Activated B cell treated with CpG ODN at 0.5 μM for 24 hours (primary cell): ENCODE measurements at regions of chr1 and their contacts with region 1.

Region 1: GRCh38 chr1:243748706-243749283 is 101.2 kb downstream of the AKT3 start:
- DNase-seq: no peak
- ATAC-seq: peak; percentile 97
- H3K4me3 Mint-ChIP-seq: no peak overlapping the region
- H3K27ac Mint-ChIP-seq: no peak overlapping the region
- H3K4me1 Mint-ChIP-seq: peaks cover 2% of the 10 kb centered on the region
- H3K27me3 Mint-ChIP-seq: no peaks in the 10 kb centered on the region
- CTCF ChIP-seq: no peak

Region 2: GRCh38 chr1:243475966-243476365 is 272.8 kb before region 1 on chr1:
- CTCF ChIA-PET with region 1: no interaction called
- POLR2A ChIA-PET with region 1: no interaction called
- intact Hi-C with region 1: loop called (anchors 5 kb)
- DNase-seq: no peak
- ATAC-seq: no peak
- H3K4me3 Mint-ChIP-seq: no peak overlapping the region
- H3K27ac Mint-ChIP-seq: no peak overlapping the region
- H3K4me1 Mint-ChIP-seq: peaks cover 25% of the 10 kb centered on the region
- H3K27me3 Mint-ChIP-seq: no peaks in the 10 kb centered on the region
- CTCF ChIP-seq: no peak

Region 3: DNA sequence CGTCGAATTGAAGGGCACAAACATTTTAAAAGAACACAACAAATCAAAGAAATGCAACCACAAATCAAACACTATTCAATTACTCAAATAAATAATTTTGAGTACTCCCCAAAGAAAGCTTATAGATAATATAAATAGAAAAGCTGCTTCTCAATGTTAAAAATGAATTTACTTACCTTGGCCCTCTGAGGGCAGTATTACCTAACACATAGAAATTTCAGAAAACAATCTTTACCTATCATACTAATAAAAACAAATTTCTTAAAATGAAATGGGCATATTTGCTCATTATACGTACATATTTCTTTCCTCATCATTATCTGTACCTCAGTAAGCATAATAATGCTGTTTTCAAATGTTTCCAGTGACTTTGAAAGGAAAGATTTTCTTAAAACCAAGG is 40.6 kb before region 1 on chr1:
- CTCF ChIA-PET with region 1: interaction called, 6 read pairs
- POLR2A ChIA-PET with region 1: no interaction called
- intact Hi-C with region 1: loop called (anchors 1 kb)
- DNase-seq: no peak
- ATAC-seq: no peak
- H3K4me3 Mint-ChIP-seq: no peak overlapping the region
- H3K27ac Mint-ChIP-seq: no peak overlapping the region
- H3K4me1 Mint-ChIP-seq: peaks cover 8% of the 10 kb centered on the region
- H3K27me3 Mint-ChIP-seq: no peaks in the 10 kb centered on the region
- CTCF ChIP-seq: no peak

Region 4: DNA sequence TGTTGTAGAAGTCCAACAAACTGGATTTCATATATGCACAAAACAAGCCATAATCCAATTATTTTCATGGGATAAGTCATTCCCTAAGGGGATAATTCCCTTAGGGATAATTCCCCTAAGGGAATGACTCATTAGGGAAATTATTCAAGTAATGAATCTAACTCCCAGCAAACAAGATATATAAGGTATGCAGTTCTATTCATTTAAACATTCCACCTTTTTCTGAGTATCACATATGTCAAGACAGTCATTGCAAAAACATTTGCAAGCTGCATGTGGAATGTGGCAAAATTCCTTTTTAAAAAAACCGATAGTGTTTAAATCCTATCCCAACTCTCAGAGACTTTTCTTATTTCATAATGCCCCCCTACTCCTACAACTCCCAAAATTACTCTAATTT is 29.9 kb before region 1 on chr1:
- CTCF ChIA-PET with region 1: no interaction called
- POLR2A ChIA-PET with region 1: no interaction called
- intact Hi-C with region 1: no loop called
- DNase-seq: no peak
- ATAC-seq: no peak
- H3K4me3 Mint-ChIP-seq: no peak overlapping the region
- H3K27ac Mint-ChIP-seq: no peak overlapping the region
- H3K4me1 Mint-ChIP-seq: peaks cover 10% of the 10 kb centered on the region
- H3K27me3 Mint-ChIP-seq: no peaks in the 10 kb centered on the region
- CTCF ChIP-seq: no peak

Region 5: GRCh38 chr1:243770860-243771259 is 22.1 kb after region 1 on chr1:
- CTCF ChIA-PET with region 1: no interaction called
- POLR2A ChIA-PET with region 1: no interaction called
- intact Hi-C with region 1: no loop called
- DNase-seq: no peak
- ATAC-seq: no peak
- H3K4me3 Mint-ChIP-seq: no peak overlapping the region
- H3K27ac Mint-ChIP-seq: no peak overlapping the region
- H3K4me1 Mint-ChIP-seq: peaks cover 8% of the 10 kb centered on the region
- H3K27me3 Mint-ChIP-seq: no peaks in the 10 kb centered on the region
- CTCF ChIP-seq: no peak

Region 6: DNA sequence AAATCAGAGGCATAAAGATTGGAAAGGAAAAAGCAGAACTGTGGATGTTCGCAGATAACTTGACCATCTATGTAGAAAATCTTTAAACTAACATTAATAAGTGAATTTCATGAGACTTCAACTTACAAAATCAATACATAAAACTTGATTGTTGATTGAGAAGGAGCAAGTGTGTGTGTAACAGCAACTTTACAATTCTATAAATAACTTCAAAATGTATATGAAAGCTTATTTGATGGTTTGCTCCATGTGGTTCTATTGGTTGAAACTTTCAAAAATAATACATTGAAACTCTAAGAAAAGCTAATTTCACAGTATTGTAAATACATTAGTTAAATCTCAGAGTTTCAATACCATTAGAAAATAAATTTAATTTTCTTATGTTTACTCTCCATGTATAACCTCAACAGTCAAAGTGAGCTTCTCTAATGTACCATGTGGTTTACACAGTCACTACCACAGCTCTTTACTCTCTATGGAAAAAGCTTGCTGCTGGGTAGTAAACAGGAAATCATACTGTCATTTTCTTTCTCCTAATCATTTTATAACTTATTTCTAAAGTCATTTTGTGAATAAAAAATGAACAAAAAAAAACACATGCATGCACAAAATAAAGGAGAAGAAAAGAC is 89.2 kb after region 1 on chr1:
- CTCF ChIA-PET with region 1: no interaction called
- POLR2A ChIA-PET with region 1: no interaction called
- intact Hi-C with region 1: no loop called
- DNase-seq: no peak
- ATAC-seq: no peak
- H3K4me3 Mint-ChIP-seq: no peak overlapping the region
- H3K27ac Mint-ChIP-seq: no peak overlapping the region
- H3K4me1 Mint-ChIP-seq: peaks cover 21% of the 10 kb centered on the region
- H3K27me3 Mint-ChIP-seq: no peaks in the 10 kb centered on the region
- CTCF ChIP-seq: no peak

Region 7: DNA sequence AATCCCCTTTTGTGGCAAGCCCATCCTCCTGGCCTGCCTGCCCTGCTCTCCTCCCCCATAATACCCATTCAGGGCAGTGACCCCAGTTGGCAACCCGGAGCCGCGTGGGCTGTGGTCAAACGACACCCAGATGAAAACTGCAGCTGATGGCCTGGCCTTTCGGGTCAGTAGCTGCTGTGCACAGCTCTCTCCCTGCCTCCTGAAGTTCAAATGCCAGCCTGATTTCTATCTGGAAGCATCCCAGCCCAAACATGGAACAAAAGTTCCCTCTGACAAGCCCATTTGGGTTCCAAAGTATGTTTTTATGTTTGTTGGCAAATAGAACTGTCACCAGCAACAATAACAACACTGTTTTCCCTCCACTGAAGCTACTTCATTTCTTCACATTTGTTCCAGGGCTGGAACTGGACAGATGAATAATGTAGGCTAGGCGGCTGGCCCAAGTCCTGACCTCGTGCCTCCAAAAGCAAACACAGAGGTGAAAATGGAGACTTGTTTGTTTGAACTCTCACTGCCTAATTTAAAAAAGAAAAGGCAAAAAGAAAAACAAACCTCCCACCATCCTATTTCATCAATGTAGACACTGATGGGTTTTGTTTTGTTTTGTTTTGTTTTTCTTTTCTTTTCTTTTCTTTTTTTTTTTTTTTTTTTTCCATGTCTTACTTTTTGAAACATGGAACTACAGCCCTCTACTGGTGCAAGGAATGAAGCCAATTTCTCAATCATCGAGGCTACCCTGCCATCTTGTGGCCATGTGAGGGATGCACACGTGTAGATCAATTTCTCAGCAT is 523.9 kb after region 1 on chr1:
- CTCF ChIA-PET with region 1: no interaction called
- POLR2A ChIA-PET with region 1: no interaction called
- intact Hi-C with region 1: loop called (anchors 1 kb)
- DNase-seq: peak; percentile 50
- ATAC-seq: peak; percentile 96
- H3K4me3 Mint-ChIP-seq: no peak overlapping the region
- H3K27ac Mint-ChIP-seq: no peak overlapping the region
- H3K4me1 Mint-ChIP-seq: peaks cover 21% of the 10 kb centered on the region
- H3K27me3 Mint-ChIP-seq: no peaks in the 10 kb centered on the region
- CTCF ChIP-seq: peak; percentile 92